ENCODE measurements at regions of chr12 and their contacts with region 1.

Region 1: DNA sequence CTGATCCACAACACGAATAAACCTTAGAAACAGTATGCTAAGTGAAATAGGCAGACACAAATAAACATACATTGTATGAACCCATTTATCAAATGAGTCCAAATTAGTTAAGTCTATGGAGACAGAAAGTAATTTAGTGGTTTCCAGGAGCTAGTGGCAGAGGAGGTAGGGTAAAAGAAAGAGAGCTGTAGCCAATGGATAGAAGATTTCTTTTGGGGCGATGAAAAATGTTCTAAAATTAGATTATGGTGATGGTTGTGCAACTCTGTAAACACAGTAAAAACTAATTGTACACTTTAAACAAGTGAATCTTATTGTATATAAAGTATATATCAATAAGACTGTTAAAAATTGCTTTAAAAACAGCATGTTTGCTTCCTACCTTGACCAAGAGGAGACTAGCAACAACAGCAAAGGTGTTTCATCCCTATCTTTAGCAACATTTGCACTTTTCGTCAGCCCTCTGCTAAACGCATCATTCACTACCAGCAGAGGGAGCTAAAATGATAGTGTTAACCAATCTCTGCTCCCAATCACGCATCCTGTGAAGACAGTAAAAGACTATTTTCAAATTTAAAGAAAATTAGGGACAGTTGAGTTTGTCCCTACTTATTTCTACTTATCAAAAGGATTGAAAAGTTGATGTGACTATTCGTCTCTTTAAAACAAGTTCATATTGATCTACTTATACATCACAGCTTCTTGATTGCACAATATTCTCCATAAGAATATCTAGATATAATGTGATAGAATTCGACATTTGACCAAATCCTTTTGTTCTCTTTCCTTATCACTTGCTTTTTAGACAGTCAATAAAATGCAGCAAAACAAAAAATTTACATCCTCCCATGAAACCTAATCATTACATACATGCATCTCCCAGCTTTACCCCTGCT is 24.0 kb upstream of the LGR5 start:
- DNase-seq: peak in 1 of 2 experiments; percentile 14
- H3K4me3 ChIP-seq: no peak overlapping the region
- H3K27ac ChIP-seq: no peak overlapping the region
- H3K4me1 ChIP-seq: no peaks in the 10 kb centered on the region
- H3K27me3 ChIP-seq: no peaks in the 10 kb centered on the region
- CTCF ChIP-seq: peak; percentile 75

Region 2: DNA sequence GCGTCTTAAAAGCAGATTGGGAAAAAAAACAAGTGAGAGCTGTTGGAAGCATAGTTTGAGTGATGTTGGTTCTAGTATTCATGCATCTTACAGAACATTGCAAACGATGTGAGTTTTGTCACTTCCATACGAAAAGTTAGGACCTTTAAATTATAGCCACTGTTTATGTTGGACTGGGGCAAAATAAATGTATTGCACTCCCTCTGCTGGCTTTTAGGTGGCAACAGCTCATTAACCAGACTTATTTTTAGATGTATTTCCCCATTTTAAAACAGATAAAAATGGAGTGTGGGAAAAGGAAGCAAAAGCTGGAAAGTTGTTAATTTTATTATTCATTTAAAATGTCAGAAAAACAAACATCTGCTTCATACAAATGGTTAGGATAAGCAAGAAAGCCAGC is 135.9 kb after region 1 on chr12:
- CTCF ChIA-PET with region 1: interaction called, 6 read pairs
- POLR2A ChIA-PET with region 1: no interaction called
- intact Hi-C with region 1: loop called (anchors 2 kb)
- DNase-seq: no peak
- H3K4me3 ChIP-seq: no peak overlapping the region
- H3K27ac ChIP-seq: no peak overlapping the region
- H3K4me1 ChIP-seq: no peaks in the 10 kb centered on the region
- H3K27me3 ChIP-seq: no peaks in the 10 kb centered on the region
- CTCF ChIP-seq: peak; percentile 53; the same call in 1 of the 2 replicates

Region 3: DNA sequence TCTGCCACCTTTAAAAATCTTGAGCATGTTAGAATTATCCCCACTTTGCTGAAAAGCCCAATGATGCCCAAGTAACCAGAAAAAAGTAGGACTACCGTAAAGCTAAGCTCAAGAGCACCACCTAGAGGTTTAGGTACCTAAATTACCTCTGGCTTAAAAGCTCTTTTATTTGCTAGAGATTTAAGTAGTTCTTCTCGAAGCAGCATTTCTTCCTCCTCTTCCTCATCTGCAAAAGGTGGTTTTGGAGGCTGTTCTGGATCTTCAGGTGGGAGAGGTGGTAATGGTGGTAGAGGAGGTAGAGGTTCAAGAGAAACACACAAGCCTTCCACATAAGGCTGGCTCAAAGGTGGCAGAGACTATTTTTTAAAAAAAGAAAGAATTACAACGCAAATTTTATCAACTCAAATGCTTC is 221.1 kb after region 1 on chr12:
- CTCF ChIA-PET with region 1: no interaction called
- POLR2A ChIA-PET with region 1: no interaction called
- intact Hi-C with region 1: loop called (anchors 5 kb)
- DNase-seq: peak in 1 of 2 experiments; percentile 53
- H3K4me3 ChIP-seq: no peak overlapping the region
- H3K27ac ChIP-seq: no peak overlapping the region
- H3K4me1 ChIP-seq: no peaks in the 10 kb centered on the region
- H3K27me3 ChIP-seq: no peaks in the 10 kb centered on the region
- CTCF ChIP-seq: peak; percentile 76